OCI-LY7 (cell line): ENCODE measurements at regions of chr7 and their contacts with region 1.

Region 1: GRCh38 chr7:11804621-11805020 is 27.4 kb downstream of the THSD7A start:
- DNase-seq: no peak
- H3K4me3 ChIP-seq: no peak overlapping the region
- H3K27ac ChIP-seq: no peak overlapping the region
- H3K4me1 ChIP-seq: no peaks in the 10 kb centered on the region
- CTCF ChIP-seq: no peak

Region 2: DNA sequence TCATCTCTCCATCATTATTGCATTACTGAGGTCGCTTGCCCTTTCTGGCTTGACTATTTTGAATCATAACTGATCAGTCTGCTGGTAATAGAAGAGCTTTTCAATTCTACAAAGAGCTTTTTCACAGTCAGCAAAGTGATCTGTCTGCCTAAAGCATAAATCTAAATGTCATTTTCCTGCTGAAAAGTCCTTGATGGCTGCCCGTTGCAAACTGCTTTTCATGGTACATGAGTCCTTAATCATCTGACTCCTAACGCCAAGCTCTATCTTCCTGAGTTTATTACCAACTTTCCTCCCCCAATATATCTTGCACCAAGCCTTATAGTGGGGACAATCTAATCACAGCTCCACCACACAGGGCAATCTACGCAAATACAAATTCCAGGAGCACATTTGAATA is 12.5 kb before region 1 on chr7:
- CTCF ChIA-PET with region 1: no interaction called
- POLR2A ChIA-PET with region 1: no interaction called
- intact Hi-C with region 1: loop called (anchors 1 kb)
- DNase-seq: no peak
- H3K4me3 ChIP-seq: no peak overlapping the region
- H3K27ac ChIP-seq: no peak overlapping the region
- H3K4me1 ChIP-seq: no peaks in the 10 kb centered on the region
- CTCF ChIP-seq: no peak